ENCODE measurements at regions of chr10 and their contacts with region 1.

Region 1: DNA sequence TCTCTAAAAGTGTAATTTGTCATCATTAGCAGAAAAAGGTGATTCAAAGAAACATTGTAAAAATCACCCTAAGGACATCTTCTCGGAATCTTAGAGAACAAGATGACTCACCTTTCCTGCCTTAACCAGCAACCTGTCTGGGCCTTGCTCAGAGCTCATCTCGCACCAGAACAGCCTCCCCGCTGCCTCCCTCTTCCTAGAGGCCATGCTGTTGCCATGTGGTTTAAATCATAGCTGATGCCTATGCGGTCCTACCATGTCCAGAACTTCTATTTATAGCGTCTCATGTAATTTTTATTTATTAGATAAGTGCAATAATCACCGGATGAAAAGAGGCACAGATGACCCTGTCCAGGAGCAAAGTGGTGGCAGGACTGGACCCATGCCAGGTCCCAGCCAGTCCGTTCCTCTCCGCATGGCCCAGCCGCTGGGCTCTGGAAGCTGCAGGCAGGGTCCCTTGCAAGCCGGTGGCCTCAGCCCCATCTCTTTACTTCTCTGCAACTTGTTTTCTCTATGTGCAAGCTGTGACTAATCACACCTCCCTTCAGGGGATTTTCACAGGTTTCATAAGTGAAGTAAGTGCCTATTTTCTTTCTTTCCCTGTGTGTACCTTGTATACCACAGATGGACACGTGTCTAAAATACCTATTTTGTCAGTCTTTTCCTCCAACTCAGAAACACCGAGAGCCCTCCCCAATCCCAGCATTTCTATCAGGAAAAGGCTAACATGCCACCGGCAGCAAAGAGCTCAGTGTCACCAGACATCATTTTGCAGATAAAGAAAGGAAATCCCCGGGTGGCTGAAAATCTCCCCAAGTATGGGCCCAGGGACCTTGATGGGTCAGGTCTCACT is 27.1 kb downstream of the KLF6 start:
- DNase-seq: peak; percentile 82
- ATAC-seq: peak; percentile 88
- H3K4me3 ChIP-seq: no peak overlapping the region; the same call in 1 of the 2 replicates
- H3K27ac ChIP-seq: peak overlapping the region; percentile 76
- H3K4me1 ChIP-seq: peaks cover 35% of the 10 kb centered on the region
- H3K27me3 ChIP-seq: no peaks in the 10 kb centered on the region
- CTCF ChIP-seq: no peak
- EP300 ChIP-seq: peak; percentile 65 to 81; a peak in 3 of 4 replicates
- POLR2A ChIP-seq: peak; percentile 44; the same call in 1 of the 2 replicates
- RAD21 ChIP-seq: peak; percentile 9; the same call in 1 of the 2 replicates

Region 2: GRCh38 chr10:3740157-3740871 is 17.6 kb before region 1 on chr10:
- CTCF ChIA-PET with region 1: interaction called, 5 read pairs
- POLR2A ChIA-PET with region 1: interaction called, 7 read pairs
- RAD21 ChIA-PET with region 1: interaction called, 22 read pairs
- SMC1A ChIA-PET with region 1: interaction called, 30 read pairs
- in situ Hi-C with region 1: no loop called
- intact Hi-C with region 1: loop called (anchors 1 kb)
- DNase-seq: no peak
- ATAC-seq: peak; percentile 72
- H3K4me3 ChIP-seq: no peak overlapping the region
- H3K27ac ChIP-seq: no peak overlapping the region
- H3K4me1 ChIP-seq: peaks cover 5% of the 10 kb centered on the region; the same call in 1 of the 2 replicates
- H3K27me3 ChIP-seq: no peaks in the 10 kb centered on the region
- CTCF ChIP-seq: no peak
- EP300 ChIP-seq: no peak
- POLR2A ChIP-seq: no peak
- RAD21 ChIP-seq: no peak

Region 3: DNA sequence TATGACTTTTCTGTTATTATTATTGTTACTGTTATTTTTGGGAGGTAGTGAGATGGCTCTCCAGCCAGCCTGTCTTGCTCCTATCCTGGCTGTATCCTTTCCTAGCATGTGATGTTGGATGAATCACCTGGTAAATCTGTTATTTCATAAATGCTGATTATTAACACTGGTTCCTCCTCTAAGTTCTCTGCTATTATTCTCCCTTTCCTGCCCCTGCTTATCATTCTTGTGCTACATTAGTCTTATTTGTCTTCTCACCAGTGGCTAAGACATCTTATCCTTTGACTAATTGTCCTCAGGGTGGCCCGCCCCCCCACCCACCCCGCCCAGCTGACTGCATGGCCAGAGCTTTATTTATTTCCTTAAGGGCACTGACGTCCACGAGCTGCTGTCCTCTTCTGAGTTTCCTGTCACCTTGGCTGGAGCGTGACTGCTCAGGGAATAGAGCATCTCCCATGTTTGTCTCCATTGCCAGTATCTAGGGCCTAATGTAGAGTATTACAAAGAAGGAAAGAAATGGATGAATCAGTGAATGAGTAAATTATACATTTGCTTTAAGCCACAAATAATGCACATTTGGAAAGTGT is 137.3 kb after region 1 on chr10:
- CTCF ChIA-PET with region 1: no interaction called
- POLR2A ChIA-PET with region 1: no interaction called
- RAD21 ChIA-PET with region 1: no interaction called
- SMC1A ChIA-PET with region 1: no interaction called
- in situ Hi-C with region 1: no loop called
- intact Hi-C with region 1: no loop called
- DNase-seq: no peak
- ATAC-seq: no peak
- H3K4me3 ChIP-seq: no peak overlapping the region
- H3K27ac ChIP-seq: no peak overlapping the region
- H3K4me1 ChIP-seq: peaks cover 10% of the 10 kb centered on the region
- H3K27me3 ChIP-seq: no peaks in the 10 kb centered on the region
- CTCF ChIP-seq: no peak
- EP300 ChIP-seq: no peak
- POLR2A ChIP-seq: no peak
- RAD21 ChIP-seq: no peak

Region 4: DNA sequence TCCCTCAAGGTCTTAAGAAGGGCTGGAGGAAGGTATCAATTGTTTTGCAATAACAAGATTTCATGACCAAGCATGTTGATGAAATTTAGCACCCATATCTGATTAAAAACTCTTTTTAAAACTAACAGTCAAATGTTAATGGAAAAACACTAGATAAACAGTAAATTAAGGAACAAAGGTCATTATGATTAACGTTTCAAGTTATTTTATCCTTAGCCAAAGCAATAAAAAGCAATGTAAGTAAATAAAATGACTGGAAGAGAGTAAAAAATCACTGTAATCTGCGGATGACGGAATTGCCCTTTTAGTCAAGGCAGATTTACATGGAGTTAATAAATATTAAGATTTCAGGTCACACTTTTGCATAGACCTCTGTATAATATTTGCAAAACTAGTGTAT is 206.7 kb after region 1 on chr10:
- CTCF ChIA-PET with region 1: no interaction called
- POLR2A ChIA-PET with region 1: no interaction called
- RAD21 ChIA-PET with region 1: no interaction called
- SMC1A ChIA-PET with region 1: no interaction called
- in situ Hi-C with region 1: no loop called
- intact Hi-C with region 1: no loop called
- DNase-seq: no peak
- ATAC-seq: no peak
- H3K4me3 ChIP-seq: no peak overlapping the region
- H3K27ac ChIP-seq: no peak overlapping the region
- H3K4me1 ChIP-seq: no peaks in the 10 kb centered on the region
- H3K27me3 ChIP-seq: peaks cover 0 to 2% of the 10 kb centered on the region in 2 experiments; a peak in 1 of 4 replicates
- CTCF ChIP-seq: no peak
- EP300 ChIP-seq: no peak
- POLR2A ChIP-seq: no peak
- RAD21 ChIP-seq: no peak

Measured in GM12878 (cell line).